ENCODE measurements at regions of chr17 and their contacts with region 1.

Region 1: DNA sequence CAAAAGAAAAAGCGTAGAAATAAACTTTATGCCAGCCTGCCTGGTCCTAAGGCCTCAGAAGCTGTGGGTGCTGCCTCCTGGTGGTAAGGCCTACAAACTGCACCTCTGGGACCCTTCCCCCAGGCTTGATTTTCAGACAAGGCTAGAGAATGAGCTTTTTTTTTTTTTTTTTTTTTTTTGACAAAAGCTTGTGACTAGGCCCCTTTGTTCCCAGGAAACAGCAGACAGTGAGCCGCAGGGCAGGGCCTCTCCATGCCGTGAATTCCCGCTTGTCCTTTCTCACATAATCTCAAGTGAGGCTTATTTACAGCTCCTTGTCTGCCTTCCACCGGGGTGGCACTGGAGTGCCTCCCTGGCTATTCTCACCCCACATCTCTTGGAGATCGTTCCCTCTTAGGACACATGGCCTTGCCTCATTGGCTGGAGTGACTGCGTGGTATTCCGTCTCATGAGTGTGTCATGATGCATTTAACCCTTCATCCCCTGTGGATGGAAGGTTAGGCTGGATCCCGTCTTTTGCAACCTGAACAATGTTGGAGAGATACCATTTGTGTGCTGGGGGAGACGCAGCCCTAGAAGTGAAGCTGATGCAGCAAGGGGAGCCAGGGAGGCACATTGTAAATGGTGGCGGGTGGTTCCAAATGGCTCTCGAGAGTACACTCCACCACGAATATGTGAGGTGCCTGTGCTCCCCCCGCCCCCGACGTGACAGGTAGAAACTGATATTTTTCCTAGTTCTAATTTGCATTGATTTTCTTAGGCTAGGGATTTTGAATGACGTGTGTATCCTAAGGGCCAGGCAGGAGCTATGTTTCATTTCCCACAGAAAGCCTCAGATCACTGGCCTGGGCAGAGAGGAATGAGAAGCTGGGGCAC is 49.6 kb downstream of the USP22 start:
- DNase-seq: peak; percentile 74
- H3K4me3 ChIP-seq: no peak overlapping the region
- H3K27ac ChIP-seq: no peak overlapping the region
- H3K4me1 ChIP-seq: no peaks in the 10 kb centered on the region
- CTCF ChIP-seq: peak; percentile 89

Region 2: DNA sequence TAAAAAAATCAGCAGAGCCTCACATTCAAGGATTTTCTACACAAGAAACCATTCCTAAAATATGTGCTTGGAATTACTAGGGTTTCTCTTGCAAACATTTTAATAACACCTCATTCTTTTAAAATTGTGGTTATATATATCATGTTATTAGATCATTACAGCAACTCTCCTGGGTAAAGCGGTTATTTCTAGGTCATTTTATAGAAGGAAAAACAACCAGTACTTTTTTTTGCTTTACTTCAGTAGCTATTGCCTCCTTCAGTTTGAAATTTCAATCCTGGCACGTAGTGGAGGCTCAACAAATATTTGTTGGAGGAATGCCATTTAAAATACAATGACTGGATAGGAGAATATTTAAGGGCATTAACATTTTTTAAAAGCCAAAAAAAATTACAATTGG is 193.1 kb before region 1 on chr17:
- CTCF ChIA-PET with region 1: no interaction called
- POLR2A ChIA-PET with region 1: no interaction called
- intact Hi-C with region 1: loop called (anchors 2 kb)
- DNase-seq: no peak
- H3K4me3 ChIP-seq: no peak overlapping the region
- H3K27ac ChIP-seq: no peak overlapping the region
- H3K4me1 ChIP-seq: no peaks in the 10 kb centered on the region
- CTCF ChIP-seq: no peak

Region 3: GRCh38 chr17:20944014-20944865 is 49.0 kb before region 1 on chr17:
- CTCF ChIA-PET with region 1: no interaction called
- POLR2A ChIA-PET with region 1: no interaction called
- intact Hi-C with region 1: loop called (anchors 5 kb)
- DNase-seq: peak; percentile 53
- H3K4me3 ChIP-seq: no peak overlapping the region
- H3K27ac ChIP-seq: no peak overlapping the region
- H3K4me1 ChIP-seq: no peaks in the 10 kb centered on the region
- CTCF ChIP-seq: peak; percentile 71

Region 4: DNA sequence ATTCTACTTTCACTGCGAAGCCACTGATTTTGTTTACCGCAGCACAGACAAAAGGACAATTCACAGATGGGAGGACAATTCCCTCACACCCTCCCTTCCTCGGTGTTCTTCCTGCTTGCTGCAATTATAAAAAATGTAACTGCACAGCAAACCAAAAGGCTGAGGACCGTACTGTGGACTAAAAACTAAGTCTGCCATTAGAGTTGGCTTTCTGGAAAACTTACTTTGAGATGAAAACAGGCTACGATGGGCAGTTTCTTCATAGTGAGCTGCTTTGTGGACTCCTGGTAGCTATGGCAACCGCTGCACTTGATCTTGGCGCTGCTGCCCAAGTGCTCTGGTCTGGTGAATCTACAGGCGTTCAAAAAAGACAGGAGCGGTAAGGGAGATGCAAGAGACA is 14.4 kb after region 1 on chr17:
- CTCF ChIA-PET with region 1: no interaction called
- POLR2A ChIA-PET with region 1: no interaction called
- intact Hi-C with region 1: no loop called
- DNase-seq: no peak
- H3K4me3 ChIP-seq: no peak overlapping the region
- H3K27ac ChIP-seq: no peak overlapping the region
- H3K4me1 ChIP-seq: no peaks in the 10 kb centered on the region
- CTCF ChIP-seq: no peak